CD4-positive, alpha-beta memory T cell (primary cell): ENCODE measurements at regions of chr14 and their contacts with region 1.

Region 1: GRCh38 chr14:58501214-58501816 is 73.8 kb downstream of the KIAA0586 start:
- DNase-seq: peak in 4 of 5 donors; percentile 28 to 30 (median 28)
- H3K4me3 ChIP-seq: no peak overlapping the region
- H3K4me3 Mint-ChIP-seq: no peak overlapping the region
- H3K27ac ChIP-seq: no peak overlapping the region
- H3K27ac Mint-ChIP-seq: no peak overlapping the region
- H3K4me1 ChIP-seq: no peaks in the 10 kb centered on the region
- H3K4me1 Mint-ChIP-seq: no peaks in the 10 kb centered on the region
- H3K27me3 ChIP-seq: no peaks in the 10 kb centered on the region
- H3K27me3 Mint-ChIP-seq: no peaks in the 10 kb centered on the region

Region 2: GRCh38 chr14:58513272-58513671 is 12.0 kb after region 1 on chr14:
- CTCF ChIA-PET with region 1: interaction called, 16 read pairs
- POLR2A ChIA-PET with region 1: no interaction called
- intact Hi-C with region 1: no loop called
- DNase-seq: no peak
- H3K4me3 ChIP-seq: no peak overlapping the region
- H3K4me3 Mint-ChIP-seq: no peak overlapping the region
- H3K27ac ChIP-seq: no peak overlapping the region
- H3K27ac Mint-ChIP-seq: no peak overlapping the region
- H3K4me1 ChIP-seq: no peaks in the 10 kb centered on the region
- H3K4me1 Mint-ChIP-seq: peaks cover 0 to 2% (median 0%) of the 10 kb centered on the region in 4 donors
- H3K27me3 ChIP-seq: no peaks in the 10 kb centered on the region
- H3K27me3 Mint-ChIP-seq: no peaks in the 10 kb centered on the region

Region 3: GRCh38 chr14:58571769-58572472 is 70.6 kb after region 1 on chr14:
- CTCF ChIA-PET with region 1: no interaction called
- POLR2A ChIA-PET with region 1: no interaction called
- intact Hi-C with region 1: loop called (anchors 1 kb)
- DNase-seq: peak; percentile 10 to 51 (median 26)
- H3K4me3 ChIP-seq: no peak overlapping the region
- H3K4me3 Mint-ChIP-seq: peak overlapping the region in 7 of 8 donors; percentile 5 to 60 (median 49)
- H3K27ac ChIP-seq: no peak overlapping the region
- H3K27ac Mint-ChIP-seq: peak overlapping the region; percentile 26 to 87 (median 65)
- H3K4me1 ChIP-seq: peaks cover 12% of the 10 kb centered on the region
- H3K4me1 Mint-ChIP-seq: peaks cover 10 to 21% (median 15%) of the 10 kb centered on the region in 4 donors
- H3K27me3 ChIP-seq: no peaks in the 10 kb centered on the region
- H3K27me3 Mint-ChIP-seq: no peaks in the 10 kb centered on the region

Region 4: DNA sequence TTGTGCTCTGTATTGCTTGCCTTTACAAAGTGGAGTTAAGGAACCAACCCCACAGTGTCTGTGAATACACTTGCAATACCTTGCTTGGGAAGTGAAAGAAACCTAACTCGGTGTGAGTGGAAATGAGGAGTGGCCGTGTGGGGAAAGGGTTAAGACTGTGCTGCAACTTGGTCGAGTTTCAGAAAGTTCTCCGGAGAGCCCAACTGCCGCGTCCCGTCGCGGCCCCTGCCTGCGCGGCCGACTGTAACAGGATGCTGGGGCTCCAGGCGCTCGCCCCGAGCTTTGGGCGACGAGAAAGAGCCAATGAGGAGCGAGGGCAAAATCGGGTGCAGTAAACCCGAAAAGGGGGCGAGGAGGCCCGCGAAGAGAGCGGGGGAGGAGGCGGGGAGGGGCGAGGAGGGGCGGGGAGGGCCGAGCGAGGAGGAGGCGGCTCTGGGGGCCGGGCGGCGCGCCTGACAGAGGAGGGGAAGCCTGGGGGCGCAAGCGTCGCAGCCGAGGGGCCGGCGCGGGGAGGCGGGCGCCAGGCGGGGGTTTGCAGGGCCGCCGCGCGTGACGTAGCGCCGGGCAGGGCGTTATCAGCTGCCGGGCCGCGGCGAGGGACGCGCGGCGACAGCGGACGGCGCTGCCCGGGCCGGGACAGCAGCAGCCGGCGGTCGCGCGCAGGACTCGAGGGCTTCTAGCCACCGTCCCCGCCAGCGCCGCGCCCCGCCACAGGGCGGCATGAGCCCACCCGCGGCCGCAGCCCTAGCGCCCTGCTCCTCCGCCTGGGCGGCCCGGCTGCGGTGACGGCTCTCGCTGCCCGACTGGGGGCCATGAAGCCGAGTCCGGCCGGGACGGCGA is 136.3 kb after region 1 on chr14 and contains the start of gene DACT1:
- CTCF ChIA-PET with region 1: no interaction called
- POLR2A ChIA-PET with region 1: no interaction called
- intact Hi-C with region 1: loop called (anchors 1 kb)
- DNase-seq: peak; percentile 16 to 40 (median 19)
- H3K4me3 ChIP-seq: peak within 1 kb of the TSS in 1 of 2 donors; percentile 5
- H3K4me3 Mint-ChIP-seq: peak within 1 kb of the TSS; percentile 76 to 92 (median 88)
- H3K27ac ChIP-seq: no peak within 1 kb of the TSS
- H3K27ac Mint-ChIP-seq: peak within 1 kb of the TSS in 4 of 7 donors; percentile 52 to 82 (median 66)
- H3K4me1 ChIP-seq: peaks cover 9% of the 10 kb centered on the region
- H3K4me1 Mint-ChIP-seq: peaks cover 6 to 29% (median 18%) of the 10 kb centered on the region in 4 donors
- H3K27me3 ChIP-seq: peaks cover 23% of the 10 kb centered on the region
- H3K27me3 Mint-ChIP-seq: peaks cover 31 to 44% of the 10 kb centered on the region in 2 donors
- total RNA-seq, gene DACT1: 1.4 to 1.8 TPM

Region 5: GRCh38 chr14:59055439-59056045 is 554.2 kb after region 1 on chr14:
- CTCF ChIA-PET with region 1: interaction called, 12 read pairs
- POLR2A ChIA-PET with region 1: no interaction called
- intact Hi-C with region 1: no loop called
- DNase-seq: peak in 4 of 5 donors; percentile 2 to 21 (median 16)
- H3K4me3 ChIP-seq: no peak overlapping the region
- H3K4me3 Mint-ChIP-seq: no peak overlapping the region
- H3K27ac ChIP-seq: no peak overlapping the region
- H3K27ac Mint-ChIP-seq: no peak overlapping the region
- H3K4me1 ChIP-seq: no peaks in the 10 kb centered on the region
- H3K4me1 Mint-ChIP-seq: no peaks in the 10 kb centered on the region
- H3K27me3 ChIP-seq: no peaks in the 10 kb centered on the region
- H3K27me3 Mint-ChIP-seq: peaks cover 4 to 5% of the 10 kb centered on the region in 2 donors

Region 6: GRCh38 chr14:59126710-59127432 is 625.6 kb after region 1 on chr14:
- CTCF ChIA-PET with region 1: interaction called, 15 read pairs
- POLR2A ChIA-PET with region 1: no interaction called
- intact Hi-C with region 1: loop called (anchors 5 kb)
- DNase-seq: peak in 4 of 5 donors; percentile 55 to 62 (median 61)
- H3K4me3 ChIP-seq: no peak overlapping the region
- H3K4me3 Mint-ChIP-seq: no peak overlapping the region
- H3K27ac ChIP-seq: no peak overlapping the region
- H3K27ac Mint-ChIP-seq: no peak overlapping the region
- H3K4me1 ChIP-seq: no peaks in the 10 kb centered on the region
- H3K4me1 Mint-ChIP-seq: peaks cover 0 to 3% (median 0%) of the 10 kb centered on the region in 4 donors
- H3K27me3 ChIP-seq: no peaks in the 10 kb centered on the region
- H3K27me3 Mint-ChIP-seq: peaks cover 13 to 19% of the 10 kb centered on the region in 2 donors